ENCODE measurements at regions of chr17 and their contacts with region 1.

Region 1: DNA sequence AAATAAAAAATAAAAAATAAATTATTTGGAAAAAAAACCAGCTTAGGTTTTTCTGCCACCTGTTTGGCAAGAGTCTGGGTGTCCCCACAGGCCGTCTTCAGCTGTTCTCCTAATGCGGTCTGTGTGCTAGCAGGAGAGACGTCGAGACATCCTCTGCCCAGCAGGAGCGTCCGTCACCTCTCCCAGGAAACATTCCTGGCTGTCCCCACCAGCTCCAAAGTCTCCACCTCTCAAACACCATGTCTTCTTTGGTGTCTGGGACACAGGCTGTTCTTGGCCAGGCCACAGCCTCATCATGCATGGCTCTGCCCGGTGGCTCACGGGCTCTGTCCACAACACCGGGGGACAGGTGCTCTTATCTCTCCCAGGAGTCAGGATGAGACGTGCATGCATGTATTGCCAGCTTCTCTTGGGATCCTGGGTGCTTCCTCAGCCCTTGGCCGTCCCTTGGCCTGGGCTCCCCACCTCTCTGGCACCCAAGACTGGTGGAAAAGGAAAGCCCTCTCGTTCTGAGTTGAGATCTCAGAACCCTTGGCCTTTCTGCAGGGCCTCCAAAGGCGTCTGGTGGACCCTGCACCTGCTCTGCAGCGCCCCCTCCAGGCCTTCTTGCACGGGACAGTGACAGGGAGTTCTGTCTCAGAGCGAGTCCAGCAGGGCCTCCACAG is 84.9 kb upstream of the CBX4 start:
- H3K4me3 ChIP-seq: no peak overlapping the region
- H3K27ac ChIP-seq: no peak overlapping the region
- H3K4me1 ChIP-seq: peaks cover 2% of the 10 kb centered on the region; the same call in 1 of the 2 replicates
- CTCF ChIP-seq: peak; percentile 62

Region 2: GRCh38 chr17:79844869-79845600 is 79.1 kb before region 1 on chr17:
- CTCF ChIA-PET with region 1: interaction called, 17 read pairs
- POLR2A ChIA-PET with region 1: interaction called, 3 read pairs
- H3K4me3 ChIP-seq: no peak overlapping the region
- H3K27ac ChIP-seq: no peak overlapping the region
- H3K4me1 ChIP-seq: peaks cover 14% of the 10 kb centered on the region; the same call in 1 of the 2 replicates
- CTCF ChIP-seq: peak; percentile 73

Measured in HEK293 (cell line).